CD4-positive, alpha-beta memory T cell (primary cell): ENCODE measurements at regions of chr14 and their contacts with region 1.

Region 1: DNA sequence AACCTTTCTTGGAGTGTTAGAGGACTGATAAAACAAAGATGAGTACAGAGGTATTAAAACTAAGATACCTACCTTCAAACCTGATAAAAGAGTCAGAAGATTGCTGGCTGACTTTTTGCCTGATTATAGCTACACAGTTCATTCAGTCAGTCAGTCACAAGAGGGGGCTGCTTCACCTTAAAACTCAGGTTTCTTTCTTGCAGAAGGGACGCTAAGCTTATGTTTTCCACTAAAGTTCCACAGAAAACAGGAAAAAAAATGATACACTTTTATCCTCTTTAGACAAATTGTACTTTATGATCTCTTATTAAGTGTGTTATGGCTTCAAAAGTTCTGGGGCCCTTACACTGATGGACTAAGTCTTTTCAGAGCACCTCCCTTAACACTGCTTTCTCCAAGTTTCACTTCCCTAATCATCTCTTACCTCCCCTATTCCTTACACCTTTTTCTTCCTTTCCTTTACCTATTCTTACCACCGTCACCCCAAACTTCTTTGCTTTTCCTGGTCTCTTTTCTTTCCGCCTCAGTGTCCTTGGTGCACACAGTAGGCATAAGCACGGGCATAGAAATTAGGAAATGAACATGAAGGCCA is 448.7 kb upstream of the OR4E1 start:
- DNase-seq: peak in 1 of 5 donors; percentile 32
- H3K4me3 ChIP-seq: no peak overlapping the region
- H3K4me3 Mint-ChIP-seq: peak overlapping the region; percentile 70 to 86 (median 78)
- H3K27ac ChIP-seq: peak overlapping the region; percentile 46
- H3K27ac Mint-ChIP-seq: peak overlapping the region; percentile 82 to 95 (median 88)
- H3K4me1 ChIP-seq: peaks cover 4% of the 10 kb centered on the region
- H3K4me1 Mint-ChIP-seq: peaks cover 2 to 12% (median 6%) of the 10 kb centered on the region in 4 donors
- H3K27me3 ChIP-seq: no peaks in the 10 kb centered on the region
- H3K27me3 Mint-ChIP-seq: no peaks in the 10 kb centered on the region

Region 2: GRCh38 chr14:22089940-22090339 is 32.4 kb before region 1 on chr14:
- CTCF ChIA-PET with region 1: no interaction called
- POLR2A ChIA-PET with region 1: no interaction called
- intact Hi-C with region 1: no loop called
- DNase-seq: no peak
- H3K4me3 ChIP-seq: no peak overlapping the region
- H3K4me3 Mint-ChIP-seq: no peak overlapping the region
- H3K27ac ChIP-seq: no peak overlapping the region
- H3K27ac Mint-ChIP-seq: no peak overlapping the region
- H3K4me1 ChIP-seq: peaks cover 7% of the 10 kb centered on the region
- H3K4me1 Mint-ChIP-seq: peaks cover 5 to 9% (median 7%) of the 10 kb centered on the region in 4 donors
- H3K27me3 ChIP-seq: no peaks in the 10 kb centered on the region
- H3K27me3 Mint-ChIP-seq: no peaks in the 10 kb centered on the region

Region 3: GRCh38 chr14:22112004-22112403 is 10.3 kb before region 1 on chr14:
- CTCF ChIA-PET with region 1: interaction called, 14 read pairs
- POLR2A ChIA-PET with region 1: interaction called, 12 read pairs
- intact Hi-C with region 1: no loop called
- DNase-seq: peak in 2 of 5 donors; percentile 34 to 38
- H3K4me3 ChIP-seq: no peak overlapping the region
- H3K4me3 Mint-ChIP-seq: peak overlapping the region; percentile 59 to 85 (median 78)
- H3K27ac ChIP-seq: peak overlapping the region; percentile 31
- H3K27ac Mint-ChIP-seq: peak overlapping the region in 4 of 7 donors; percentile 61 to 83 (median 72)
- H3K4me1 ChIP-seq: no peaks in the 10 kb centered on the region
- H3K4me1 Mint-ChIP-seq: peaks cover 0 to 16% (median 4%) of the 10 kb centered on the region in 4 donors
- H3K27me3 ChIP-seq: no peaks in the 10 kb centered on the region
- H3K27me3 Mint-ChIP-seq: no peaks in the 10 kb centered on the region

Region 4: DNA sequence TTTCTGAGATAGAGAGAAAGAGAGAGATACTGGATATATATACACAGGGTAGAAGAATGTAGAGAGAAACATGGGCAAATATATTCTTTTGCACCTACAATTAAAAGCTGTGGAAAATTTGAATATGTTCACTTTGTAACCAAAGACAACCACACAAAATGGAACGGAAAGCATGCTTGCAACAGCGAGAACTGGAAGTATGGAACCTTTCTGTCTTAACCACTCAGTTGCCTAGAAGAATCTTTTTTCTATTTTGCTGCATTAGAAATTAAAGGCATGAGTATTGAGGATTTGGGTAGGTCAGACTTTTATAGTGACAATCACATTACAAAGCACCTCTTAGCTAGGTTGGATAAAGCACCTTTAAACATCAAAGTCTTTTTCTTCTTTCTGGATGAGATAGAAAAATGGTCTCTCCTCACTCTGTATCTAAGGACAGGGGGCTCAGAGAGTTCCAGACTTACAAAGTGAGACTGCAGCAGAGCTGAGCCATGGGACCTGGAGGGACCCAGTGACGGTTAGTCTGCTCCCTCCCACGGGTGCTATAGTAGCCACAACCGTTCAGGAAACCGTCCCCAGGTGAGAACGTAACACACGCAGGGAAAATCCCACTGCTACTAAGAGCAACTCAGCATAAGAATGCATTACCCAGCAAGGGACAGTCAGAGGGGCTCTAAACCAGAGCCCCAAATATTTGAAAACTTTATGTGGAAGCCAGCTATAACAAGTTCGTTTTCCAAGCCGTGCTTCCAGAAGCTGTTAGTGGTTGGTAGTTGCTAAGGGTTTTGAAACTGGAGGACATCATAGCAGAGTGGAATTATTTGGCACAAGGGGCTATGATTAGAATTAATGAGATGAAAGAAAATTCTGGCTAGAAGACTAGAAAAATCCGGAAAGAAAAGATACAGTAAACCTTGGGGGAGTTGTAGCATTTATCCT is 369.6 kb after region 1 on chr14:
- CTCF ChIA-PET with region 1: no interaction called
- POLR2A ChIA-PET with region 1: interaction called, 10 read pairs
- intact Hi-C with region 1: no loop called
- DNase-seq: peak in 2 of 5 donors; percentile 36 to 80
- H3K4me3 ChIP-seq: peak overlapping the region in 1 of 2 donors; percentile 55
- H3K4me3 Mint-ChIP-seq: peak overlapping the region; percentile 86 to 96 (median 90)
- H3K27ac ChIP-seq: peak overlapping the region; percentile 67
- H3K27ac Mint-ChIP-seq: peak overlapping the region; percentile 91 to 100 (median 94)
- H3K4me1 ChIP-seq: peaks cover 6% of the 10 kb centered on the region
- H3K4me1 Mint-ChIP-seq: peaks cover 1 to 76% (median 9%) of the 10 kb centered on the region in 4 donors
- H3K27me3 ChIP-seq: no peaks in the 10 kb centered on the region
- H3K27me3 Mint-ChIP-seq: no peaks in the 10 kb centered on the region

Region 5: GRCh38 chr14:22519877-22520685 is 397.8 kb after region 1 on chr14:
- CTCF ChIA-PET with region 1: no interaction called
- POLR2A ChIA-PET with region 1: interaction called, 12 read pairs
- intact Hi-C with region 1: no loop called
- DNase-seq: no peak
- H3K4me3 ChIP-seq: peak overlapping the region; percentile 2 to 39
- H3K4me3 Mint-ChIP-seq: peak overlapping the region; percentile 83 to 91 (median 90)
- H3K27ac ChIP-seq: peak overlapping the region; percentile 76
- H3K27ac Mint-ChIP-seq: peak overlapping the region; percentile 95 to 100 (median 95)
- H3K4me1 ChIP-seq: peaks cover 98% of the 10 kb centered on the region
- H3K4me1 Mint-ChIP-seq: peaks cover 70 to 98% (median 84%) of the 10 kb centered on the region in 4 donors
- H3K27me3 ChIP-seq: no peaks in the 10 kb centered on the region
- H3K27me3 Mint-ChIP-seq: no peaks in the 10 kb centered on the region

Region 6: DNA sequence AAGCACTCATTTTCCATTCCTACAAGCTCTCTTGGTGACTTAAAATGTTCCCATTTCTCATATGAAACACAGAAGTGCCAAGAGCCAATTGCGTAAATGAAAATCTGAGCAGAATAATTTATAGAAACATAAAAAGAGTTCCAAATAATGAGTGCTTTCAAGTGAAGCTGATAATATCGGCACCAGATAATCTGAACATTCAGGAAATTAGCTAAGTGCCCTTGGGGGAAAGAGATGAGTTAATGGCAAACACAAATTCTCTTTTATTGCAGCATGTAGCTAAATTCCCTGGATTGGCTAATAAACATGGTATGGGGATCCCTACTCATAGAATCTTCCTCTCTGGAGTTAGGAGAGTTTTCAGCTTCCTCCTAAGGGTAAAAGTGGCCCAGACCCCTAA is 420.0 kb after region 1 on chr14:
- CTCF ChIA-PET with region 1: no interaction called
- POLR2A ChIA-PET with region 1: interaction called, 10 read pairs
- intact Hi-C with region 1: no loop called
- DNase-seq: no peak
- H3K4me3 ChIP-seq: peak overlapping the region; percentile 37 to 46
- H3K4me3 Mint-ChIP-seq: peak overlapping the region; percentile 69 to 91 (median 85)
- H3K27ac ChIP-seq: peak overlapping the region; percentile 72
- H3K27ac Mint-ChIP-seq: peak overlapping the region; percentile 92 to 100 (median 98)
- H3K4me1 ChIP-seq: peaks cover 100% of the 10 kb centered on the region
- H3K4me1 Mint-ChIP-seq: peaks cover 88 to 100% (median 96%) of the 10 kb centered on the region in 4 donors
- H3K27me3 ChIP-seq: no peaks in the 10 kb centered on the region
- H3K27me3 Mint-ChIP-seq: no peaks in the 10 kb centered on the region